ENCODE measurements at regions of chr20 and their contacts with region 1.

Region 1: GRCh38 chr20:3339076-3339475 is 68.4 kb downstream of the DNAAF9 start:
- DNase-seq: no peak
- H3K4me3 ChIP-seq: no peak overlapping the region
- H3K27ac ChIP-seq: no peak overlapping the region
- H3K4me1 ChIP-seq: no peaks in the 10 kb centered on the region
- H3K27me3 ChIP-seq: no peaks in the 10 kb centered on the region
- CTCF ChIP-seq: no peak

Region 2: GRCh38 chr20:3380228-3381070 is 41.4 kb after region 1 on chr20:
- CTCF ChIA-PET with region 1: no interaction called
- dilution Hi-C with region 1: loop called (anchors 5 kb)
- in situ Hi-C with region 1: no loop called
- intact Hi-C with region 1: no loop called
- DNase-seq: no peak
- H3K4me3 ChIP-seq: no peak overlapping the region
- H3K27ac ChIP-seq: no peak overlapping the region
- H3K4me1 ChIP-seq: no peaks in the 10 kb centered on the region
- H3K27me3 ChIP-seq: no peaks in the 10 kb centered on the region
- CTCF ChIP-seq: no peak

Measured in mammary epithelial cell (primary cell).